Caco-2 (cell line): ENCODE measurements at regions of chr17 and their contacts with region 1.

Region 1: GRCh38 chr17:48024937-48025906 is 12.4 kb downstream of the COPZ2 start:
- DNase-seq: peak; percentile 100
- H3K4me3 ChIP-seq: peak overlapping the region; percentile 43
- H3K4me3 Mint-ChIP-seq: peak overlapping the region; percentile 87
- H3K27ac Mint-ChIP-seq: peak overlapping the region; percentile 89
- H3K4me1 ChIP-seq: peaks cover 26% of the 10 kb centered on the region
- H3K4me1 Mint-ChIP-seq: peaks cover 34% of the 10 kb centered on the region
- H3K27me3 ChIP-seq: peaks cover 5% of the 10 kb centered on the region
- H3K27me3 Mint-ChIP-seq: peaks cover 17% of the 10 kb centered on the region
- CTCF ChIP-seq: peak; percentile 98 to 100

Region 2: DNA sequence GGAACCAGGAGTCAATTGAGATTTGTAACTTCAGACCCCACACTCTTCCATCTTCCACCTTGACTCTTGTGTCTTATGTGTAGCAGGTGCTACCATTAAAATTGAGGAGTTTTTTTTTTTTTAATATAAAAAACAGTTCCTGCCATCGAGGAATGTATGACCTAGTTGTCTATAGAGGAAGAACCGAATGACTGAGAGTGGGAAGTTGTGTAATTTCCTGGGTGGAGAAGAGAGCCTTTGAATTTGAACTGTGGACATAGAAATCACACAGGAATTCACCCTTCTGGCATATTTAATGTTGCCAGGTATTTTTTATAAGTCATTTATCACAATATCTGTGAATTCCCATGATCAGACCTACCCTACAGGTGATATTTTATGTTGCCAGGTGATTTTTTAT is 107.2 kb before region 1 on chr17:
- CTCF ChIA-PET with region 1: no interaction called
- POLR2A ChIA-PET with region 1: no interaction called
- intact Hi-C with region 1: no loop called
- DNase-seq: no peak
- H3K4me3 ChIP-seq: no peak overlapping the region
- H3K4me3 Mint-ChIP-seq: no peak overlapping the region
- H3K27ac Mint-ChIP-seq: no peak overlapping the region
- H3K4me1 ChIP-seq: no peaks in the 10 kb centered on the region
- H3K4me1 Mint-ChIP-seq: no peaks in the 10 kb centered on the region
- H3K27me3 ChIP-seq: no peaks in the 10 kb centered on the region
- H3K27me3 Mint-ChIP-seq: no peaks in the 10 kb centered on the region
- CTCF ChIP-seq: no peak

Region 3: DNA sequence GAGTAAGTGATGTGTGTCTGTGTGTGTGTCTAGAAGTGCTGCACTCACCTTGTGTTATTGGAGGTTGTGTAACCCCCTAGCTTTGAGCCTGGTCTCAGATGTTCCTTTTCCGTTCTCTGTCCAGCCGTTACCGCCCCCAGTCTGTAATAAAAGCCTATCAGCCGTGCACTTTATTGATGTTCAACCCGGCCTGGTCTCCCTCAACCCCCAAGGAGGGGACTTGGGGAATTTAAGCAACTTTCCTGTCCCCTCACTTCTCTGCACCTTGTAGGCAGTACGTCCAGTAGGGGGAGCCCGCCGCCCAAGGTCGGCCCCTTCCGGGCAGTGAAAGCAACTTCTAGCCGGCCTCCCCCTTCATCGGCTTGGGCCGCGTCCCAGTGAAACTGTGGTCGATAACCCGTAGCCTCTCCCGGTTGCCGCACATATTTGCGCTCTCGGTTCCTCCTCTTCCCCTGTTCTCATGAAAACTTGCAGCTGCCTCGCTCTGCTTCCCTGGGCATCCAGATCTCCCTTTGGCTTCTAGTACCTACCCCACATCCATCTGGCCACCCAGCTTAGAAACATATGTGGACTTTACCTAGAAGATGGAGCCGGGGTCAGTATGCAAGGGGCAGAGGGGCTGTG is 76.0 kb before region 1 on chr17:
- CTCF ChIA-PET with region 1: interaction called, 10 read pairs
- POLR2A ChIA-PET with region 1: interaction called, 3 read pairs
- intact Hi-C with region 1: no loop called
- DNase-seq: peak; percentile 96 to 99
- H3K4me3 ChIP-seq: peak overlapping the region; percentile 1; the same call in 1 of the 2 replicates
- H3K4me3 Mint-ChIP-seq: peak overlapping the region; percentile 55
- H3K27ac Mint-ChIP-seq: peak overlapping the region; percentile 58
- H3K4me1 ChIP-seq: peaks cover 14% of the 10 kb centered on the region
- H3K4me1 Mint-ChIP-seq: peaks cover 28% of the 10 kb centered on the region
- H3K27me3 ChIP-seq: no peaks in the 10 kb centered on the region
- H3K27me3 Mint-ChIP-seq: no peaks in the 10 kb centered on the region
- CTCF ChIP-seq: peak; percentile 100

Region 4: GRCh38 chr17:47996201-47996600 is 29.0 kb before region 1 on chr17:
- CTCF ChIA-PET with region 1: no interaction called
- POLR2A ChIA-PET with region 1: no interaction called
- intact Hi-C with region 1: no loop called
- DNase-seq: no peak
- H3K4me3 ChIP-seq: no peak overlapping the region
- H3K4me3 Mint-ChIP-seq: no peak overlapping the region
- H3K27ac Mint-ChIP-seq: no peak overlapping the region
- H3K4me1 ChIP-seq: no peaks in the 10 kb centered on the region
- H3K4me1 Mint-ChIP-seq: no peaks in the 10 kb centered on the region
- H3K27me3 ChIP-seq: no peaks in the 10 kb centered on the region
- H3K27me3 Mint-ChIP-seq: peaks cover 2% of the 10 kb centered on the region
- CTCF ChIP-seq: no peak

Region 5: DNA sequence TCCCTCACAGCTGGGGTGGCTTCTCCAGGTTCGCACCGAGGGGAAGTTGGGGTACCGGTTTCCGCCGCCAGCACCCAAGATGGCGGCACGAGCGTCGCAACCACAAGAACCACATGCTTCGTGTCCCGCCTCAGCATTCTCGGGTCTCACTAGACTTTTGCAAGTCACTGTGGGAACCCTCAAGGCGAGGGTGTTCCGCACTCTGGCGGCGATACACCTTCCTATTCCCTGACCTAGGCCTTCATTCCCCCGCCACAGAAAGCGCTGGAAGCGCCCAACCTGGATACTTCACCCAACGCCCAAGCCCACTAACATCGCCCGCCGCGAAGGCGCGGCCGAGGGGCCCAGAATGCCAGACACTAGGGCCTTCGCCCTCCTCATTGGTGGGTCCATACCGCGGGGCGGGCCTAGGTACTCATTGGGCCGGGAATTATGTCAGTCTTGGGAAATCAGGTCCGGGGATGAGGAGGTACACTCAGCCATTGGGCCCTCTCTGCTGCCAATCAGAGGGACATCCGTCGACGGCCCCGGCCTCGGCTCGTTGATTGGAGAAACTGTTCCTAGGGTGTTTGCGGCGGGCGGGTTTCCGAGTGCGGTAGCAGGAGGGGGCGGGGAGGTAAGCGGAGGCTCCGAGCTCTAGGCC is 22.6 kb after region 1 on chr17 and contains the start of gene NFE2L1:
- CTCF ChIA-PET with region 1: interaction called, 143 read pairs
- POLR2A ChIA-PET with region 1: interaction called, 46 read pairs
- intact Hi-C with region 1: loop called (anchors 1 kb)
- DNase-seq: peak; percentile 100
- H3K4me3 ChIP-seq: peak within 1 kb of the TSS; percentile 84
- H3K4me3 Mint-ChIP-seq: peak within 1 kb of the TSS; percentile 87
- H3K27ac Mint-ChIP-seq: peak within 1 kb of the TSS; percentile 100
- H3K4me1 ChIP-seq: peaks cover 22% of the 10 kb centered on the region
- H3K4me1 Mint-ChIP-seq: peaks cover 30% of the 10 kb centered on the region
- H3K27me3 ChIP-seq: no peaks in the 10 kb centered on the region
- H3K27me3 Mint-ChIP-seq: no peaks in the 10 kb centered on the region
- CTCF ChIP-seq: no peak
- total RNA-seq, gene NFE2L1: 322 and 356 TPM in 2 replicates

Region 6: GRCh38 chr17:48084932-48085444 is 59.8 kb after region 1 on chr17:
- CTCF ChIA-PET with region 1: interaction called, 45 read pairs
- POLR2A ChIA-PET with region 1: interaction called, 4 read pairs
- intact Hi-C with region 1: no loop called
- DNase-seq: no peak
- H3K4me3 ChIP-seq: no peak overlapping the region
- H3K4me3 Mint-ChIP-seq: no peak overlapping the region
- H3K27ac Mint-ChIP-seq: no peak overlapping the region
- H3K4me1 ChIP-seq: peaks cover 7% of the 10 kb centered on the region; the same call in 1 of the 2 replicates
- H3K4me1 Mint-ChIP-seq: no peaks in the 10 kb centered on the region
- H3K27me3 ChIP-seq: no peaks in the 10 kb centered on the region
- H3K27me3 Mint-ChIP-seq: no peaks in the 10 kb centered on the region
- CTCF ChIP-seq: no peak

Region 7: DNA sequence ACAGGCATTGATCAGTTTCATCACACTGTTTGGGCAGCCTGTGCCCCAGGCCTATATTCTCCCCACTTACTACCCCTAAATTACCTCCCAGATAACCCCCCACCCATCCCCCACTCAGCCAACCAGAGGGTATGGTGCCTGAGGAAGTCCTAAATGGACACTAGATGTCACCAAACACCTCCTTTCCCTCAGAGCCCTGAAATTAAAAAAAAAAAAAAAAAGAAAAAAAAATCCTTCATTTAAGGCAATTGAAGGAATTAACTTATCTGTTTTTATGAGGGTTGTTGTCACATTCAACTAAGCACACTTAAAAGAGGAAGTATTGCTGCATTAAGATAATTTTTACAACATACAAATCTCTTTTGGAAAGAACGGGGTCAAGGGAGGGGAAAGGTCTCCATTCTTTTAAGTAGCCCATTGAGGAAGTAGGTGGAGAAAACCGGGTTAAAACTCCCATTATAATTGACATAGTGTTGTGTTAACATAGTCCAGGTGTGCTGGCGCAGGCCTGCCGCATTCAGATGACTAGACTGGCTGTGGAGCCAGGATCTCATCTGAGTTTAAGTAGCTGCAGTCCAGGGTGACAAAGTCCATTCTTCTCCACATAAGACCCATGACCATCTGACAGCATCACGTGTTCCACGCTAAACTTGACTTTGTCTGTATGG is 128.6 kb after region 1 on chr17:
- CTCF ChIA-PET with region 1: interaction called, 10 read pairs
- POLR2A ChIA-PET with region 1: no interaction called
- intact Hi-C with region 1: no loop called
- DNase-seq: peak; percentile 80 to 88
- H3K4me3 ChIP-seq: no peak overlapping the region
- H3K4me3 Mint-ChIP-seq: peak overlapping the region; percentile 28
- H3K27ac Mint-ChIP-seq: no peak overlapping the region
- H3K4me1 ChIP-seq: peaks cover 10% of the 10 kb centered on the region
- H3K4me1 Mint-ChIP-seq: peaks cover 14% of the 10 kb centered on the region
- H3K27me3 ChIP-seq: peaks cover 2% of the 10 kb centered on the region; the same call in 1 of the 2 replicates
- H3K27me3 Mint-ChIP-seq: peaks cover 15% of the 10 kb centered on the region
- CTCF ChIP-seq: peak; percentile 88 to 93

Region 8: GRCh38 chr17:48374650-48375230 is 349.5 kb after region 1 on chr17:
- CTCF ChIA-PET with region 1: interaction called, 3 read pairs
- POLR2A ChIA-PET with region 1: no interaction called
- intact Hi-C with region 1: loop called (anchors 1 kb)
- DNase-seq: peak; percentile 81 to 88
- H3K4me3 ChIP-seq: no peak overlapping the region
- H3K4me3 Mint-ChIP-seq: no peak overlapping the region
- H3K27ac Mint-ChIP-seq: no peak overlapping the region
- H3K4me1 ChIP-seq: no peaks in the 10 kb centered on the region
- H3K4me1 Mint-ChIP-seq: no peaks in the 10 kb centered on the region
- H3K27me3 ChIP-seq: no peaks in the 10 kb centered on the region; the same call in 1 of the 2 replicates
- H3K27me3 Mint-ChIP-seq: peaks cover 2% of the 10 kb centered on the region
- CTCF ChIP-seq: peak; percentile 98